ENCODE measurements at regions of chr3 and their contacts with region 1.

Region 1: GRCh38 chr3:113736548-113737089 is 9.4 kb downstream of the NAA50 start:
- DNase-seq: no peak
- H3K4me3 Mint-ChIP-seq: no peak overlapping the region
- H3K27ac Mint-ChIP-seq: no peak overlapping the region
- H3K4me1 Mint-ChIP-seq: peaks cover 47% of the 10 kb centered on the region
- H3K27me3 Mint-ChIP-seq: no peaks in the 10 kb centered on the region

Region 2: GRCh38 chr3:113912552-113913236 is 176.1 kb after region 1 on chr3:
- intact Hi-C with region 1: loop called (anchors 1 kb)
- DNase-seq: peak; percentile 13
- H3K4me3 Mint-ChIP-seq: peak overlapping the region; percentile 52
- H3K27ac Mint-ChIP-seq: no peak overlapping the region
- H3K4me1 Mint-ChIP-seq: peaks cover 5% of the 10 kb centered on the region
- H3K27me3 Mint-ChIP-seq: peaks cover 10% of the 10 kb centered on the region